ENCODE measurements at regions of chr19 and their contacts with region 1.

Region 1: DNA sequence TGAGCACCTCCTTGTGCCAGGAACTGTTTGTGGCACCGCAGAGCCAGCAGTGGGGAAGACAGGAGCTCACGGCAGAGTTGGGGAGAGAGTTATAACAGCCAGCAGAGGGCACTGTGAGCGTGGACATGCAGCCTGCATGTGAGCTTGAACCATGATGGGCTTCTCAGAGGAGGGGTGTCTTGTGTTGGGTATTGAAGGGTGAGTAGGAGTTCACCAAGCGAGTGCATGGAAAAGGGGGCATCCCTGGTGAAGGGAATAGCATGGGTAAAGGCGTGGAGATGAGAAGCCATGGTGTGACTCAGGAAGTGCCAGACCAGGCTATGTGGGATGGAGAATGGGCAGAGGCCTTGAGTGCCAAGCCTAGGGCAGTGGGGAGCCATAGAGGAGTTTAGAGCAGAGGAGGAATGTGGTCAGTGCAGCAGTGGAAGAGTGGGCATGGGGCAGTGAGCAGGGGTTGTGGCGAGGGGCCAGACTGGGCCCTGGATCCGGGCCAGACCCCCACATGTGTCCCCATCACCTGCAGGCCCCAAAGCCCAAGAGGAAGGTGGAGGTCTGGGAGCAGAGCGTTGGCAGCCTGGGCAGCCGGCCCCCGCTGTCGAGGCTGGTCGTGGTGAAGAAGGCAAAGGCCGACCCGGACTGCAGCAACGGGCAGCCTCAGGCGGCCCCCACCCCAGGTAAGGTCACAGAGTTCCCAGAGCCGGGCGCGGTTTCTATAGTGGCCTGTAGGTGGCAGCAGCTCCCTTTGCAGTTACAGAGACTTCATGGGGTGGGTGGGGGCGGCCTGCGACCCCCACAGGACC is 11.8 kb upstream of the SHD start:
- DNase-seq: peak; percentile 55
- H3K4me3 Mint-ChIP-seq: no peak overlapping the region
- H3K27ac Mint-ChIP-seq: no peak overlapping the region
- H3K4me1 Mint-ChIP-seq: no peaks in the 10 kb centered on the region
- H3K27me3 Mint-ChIP-seq: no peaks in the 10 kb centered on the region
- CTCF ChIP-seq: peak; percentile 57

Region 2: DNA sequence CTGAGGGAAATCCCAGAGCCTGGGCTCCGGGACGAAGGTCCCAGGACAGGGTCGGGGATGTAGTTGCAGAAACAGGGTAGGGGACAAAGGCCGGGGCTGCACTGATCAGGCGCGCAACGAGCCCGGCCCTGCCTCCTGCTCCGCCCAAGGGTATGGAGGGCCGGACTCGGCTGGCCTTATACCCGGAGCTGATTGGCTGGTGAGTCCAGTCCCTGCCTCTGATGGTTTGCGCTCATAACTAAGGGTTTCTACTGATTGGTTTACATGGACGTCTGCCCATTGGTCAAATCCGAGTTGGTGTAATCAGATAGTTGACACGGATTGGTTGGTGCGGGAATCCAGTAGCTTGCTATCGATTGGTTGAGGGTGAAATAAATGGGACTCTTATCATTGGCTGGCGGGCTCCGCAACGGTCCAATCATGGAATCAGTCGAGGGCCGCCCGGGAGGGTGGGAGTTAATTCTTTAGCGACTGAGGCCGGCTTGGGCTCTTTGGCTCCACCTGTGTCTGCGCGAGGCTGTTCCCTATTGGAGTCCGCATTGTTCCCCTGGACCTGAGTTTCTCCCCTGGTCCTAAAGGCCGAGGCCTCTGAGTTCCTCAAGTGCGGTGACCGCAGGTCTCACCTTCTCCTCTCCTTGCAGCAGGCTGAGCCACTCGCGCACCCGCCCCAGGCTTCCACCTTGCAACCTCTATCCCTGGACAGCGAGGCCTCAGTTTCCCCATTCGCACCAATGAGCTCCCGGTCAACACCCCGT is 75.5 kb after region 1 on chr19:
- CTCF ChIA-PET with region 1: interaction called, 13 read pairs
- intact Hi-C with region 1: no loop called
- DNase-seq: peak; percentile 89
- H3K4me3 Mint-ChIP-seq: peak overlapping the region; percentile 87
- H3K27ac Mint-ChIP-seq: peak overlapping the region; percentile 96
- H3K4me1 Mint-ChIP-seq: peaks cover 13% of the 10 kb centered on the region
- H3K27me3 Mint-ChIP-seq: no peaks in the 10 kb centered on the region
- CTCF ChIP-seq: no peak

Region 3: DNA sequence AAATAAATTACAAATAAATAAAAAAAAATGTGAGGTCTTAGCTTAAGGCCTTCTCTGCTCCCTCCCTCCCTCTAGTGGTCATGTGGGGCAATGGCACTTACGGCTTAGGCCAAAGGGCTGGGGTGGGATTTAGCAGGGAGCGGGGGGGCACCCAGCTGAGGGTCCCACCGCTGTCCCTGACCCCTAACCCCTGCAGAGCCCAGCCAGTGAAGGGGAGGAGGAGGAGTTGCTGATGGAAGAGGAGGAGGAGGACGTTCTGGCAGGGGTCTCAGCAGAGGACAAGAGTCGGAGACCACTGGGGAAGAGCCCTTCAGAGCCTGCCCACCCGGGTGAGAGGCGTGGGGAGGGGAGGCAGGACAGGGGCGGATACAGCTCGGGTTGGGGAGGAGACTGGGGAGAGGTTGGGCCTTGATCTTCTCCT is 85.4 kb after region 1 on chr19:
- CTCF ChIA-PET with region 1: interaction called, 39 read pairs
- intact Hi-C with region 1: loop called (anchors 2 kb)
- DNase-seq: peak; percentile 59
- H3K4me3 Mint-ChIP-seq: no peak overlapping the region
- H3K27ac Mint-ChIP-seq: no peak overlapping the region
- H3K4me1 Mint-ChIP-seq: no peaks in the 10 kb centered on the region
- H3K27me3 Mint-ChIP-seq: no peaks in the 10 kb centered on the region
- CTCF ChIP-seq: peak; percentile 68

Region 4: DNA sequence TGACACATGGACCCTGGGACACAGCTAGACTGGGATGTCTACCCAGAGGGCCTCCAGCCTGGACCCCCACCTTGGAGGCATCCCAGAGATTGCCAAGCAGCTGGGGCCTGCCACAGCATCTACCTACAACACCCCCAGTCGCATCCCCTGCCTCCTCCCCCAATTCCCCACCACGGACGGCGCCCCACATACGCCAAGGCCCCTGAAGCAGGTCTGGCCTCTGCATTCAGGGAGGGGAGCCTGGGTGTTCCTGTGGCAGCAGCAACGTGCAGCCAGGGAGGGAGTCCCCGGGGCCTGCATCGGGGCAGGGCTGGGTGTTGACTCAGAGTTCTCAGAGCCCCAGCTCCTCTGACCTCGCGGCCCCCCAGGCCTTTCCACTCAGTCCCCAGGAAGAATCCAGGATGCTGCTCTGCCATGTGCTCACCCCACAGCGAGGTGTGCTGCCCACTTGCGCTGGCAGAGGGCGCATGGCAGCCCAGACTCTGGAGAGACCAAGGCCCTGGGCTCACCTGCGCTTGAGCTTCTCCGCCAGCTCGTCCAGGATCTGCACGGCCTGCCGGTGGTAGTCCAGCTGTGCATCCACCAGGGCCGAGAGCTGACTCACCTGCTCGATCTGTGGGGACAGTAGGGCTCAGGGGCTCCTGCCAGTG is 95.7 kb after region 1 on chr19:
- CTCF ChIA-PET with region 1: no interaction called
- intact Hi-C with region 1: no loop called
- DNase-seq: peak; percentile 29
- H3K4me3 Mint-ChIP-seq: no peak overlapping the region
- H3K27ac Mint-ChIP-seq: no peak overlapping the region
- H3K4me1 Mint-ChIP-seq: no peaks in the 10 kb centered on the region
- H3K27me3 Mint-ChIP-seq: no peaks in the 10 kb centered on the region
- CTCF ChIP-seq: peak; percentile 36

Measured in Calu3 (cell line).